Testis (tissue), 5 donors: ENCODE measurements at regions of chr4 and their contacts with region 1.

Region 1: DNA sequence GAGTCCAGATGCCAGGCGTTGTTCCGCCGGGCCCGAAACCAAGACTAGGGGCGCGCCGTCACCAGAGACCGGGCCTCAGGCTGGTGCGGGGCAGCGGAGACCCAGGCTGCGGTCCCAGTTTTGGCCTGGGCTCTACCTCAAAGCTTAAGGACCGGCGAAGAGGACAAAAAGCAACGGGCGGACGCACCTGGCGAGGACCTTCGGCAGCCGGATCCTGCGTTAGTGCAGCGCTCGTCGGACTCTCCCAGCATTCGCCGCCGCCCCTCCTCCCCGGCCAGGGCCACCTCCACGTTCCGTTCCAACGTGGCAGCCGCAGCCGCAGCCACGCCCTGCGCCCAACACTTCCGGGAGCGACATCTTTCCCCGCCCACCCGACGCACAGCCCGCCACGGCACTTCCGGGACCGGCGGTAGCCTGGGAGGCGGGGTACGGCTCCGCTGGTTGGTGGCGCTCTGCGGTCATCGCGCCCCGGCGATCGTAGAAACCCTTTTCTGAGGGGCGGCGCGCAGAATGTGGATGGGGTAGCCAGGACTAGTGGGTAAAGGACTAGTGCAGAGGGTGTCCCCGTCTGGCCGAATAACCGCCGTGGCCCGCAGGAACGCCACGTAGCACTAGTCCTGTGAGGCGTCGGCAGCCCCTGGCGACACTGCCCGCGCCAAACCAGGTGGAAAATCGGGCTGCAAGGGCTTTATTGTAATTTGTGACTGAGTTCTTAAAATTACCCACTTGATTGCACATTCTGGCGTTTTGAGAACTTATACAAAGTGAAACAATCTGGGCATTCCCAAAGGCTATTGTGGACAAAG is at the start of gene SEC31A:
- DNase-seq: peak; percentile 96
- H3K4me3 ChIP-seq: peak within 1 kb of the TSS; percentile 79 to 90
- H3K27ac ChIP-seq: peak within 1 kb of the TSS; percentile 86 to 95
- H3K4me1 ChIP-seq: peaks cover 17% of the 10 kb centered on the region
- H3K27me3 ChIP-seq: no peaks in the 10 kb centered on the region
- CTCF ChIP-seq: no peak
- POLR2A ChIP-seq: peak; percentile 86
- total RNA-seq, gene SEC31A: 168 to 191 TPM

Region 2: DNA sequence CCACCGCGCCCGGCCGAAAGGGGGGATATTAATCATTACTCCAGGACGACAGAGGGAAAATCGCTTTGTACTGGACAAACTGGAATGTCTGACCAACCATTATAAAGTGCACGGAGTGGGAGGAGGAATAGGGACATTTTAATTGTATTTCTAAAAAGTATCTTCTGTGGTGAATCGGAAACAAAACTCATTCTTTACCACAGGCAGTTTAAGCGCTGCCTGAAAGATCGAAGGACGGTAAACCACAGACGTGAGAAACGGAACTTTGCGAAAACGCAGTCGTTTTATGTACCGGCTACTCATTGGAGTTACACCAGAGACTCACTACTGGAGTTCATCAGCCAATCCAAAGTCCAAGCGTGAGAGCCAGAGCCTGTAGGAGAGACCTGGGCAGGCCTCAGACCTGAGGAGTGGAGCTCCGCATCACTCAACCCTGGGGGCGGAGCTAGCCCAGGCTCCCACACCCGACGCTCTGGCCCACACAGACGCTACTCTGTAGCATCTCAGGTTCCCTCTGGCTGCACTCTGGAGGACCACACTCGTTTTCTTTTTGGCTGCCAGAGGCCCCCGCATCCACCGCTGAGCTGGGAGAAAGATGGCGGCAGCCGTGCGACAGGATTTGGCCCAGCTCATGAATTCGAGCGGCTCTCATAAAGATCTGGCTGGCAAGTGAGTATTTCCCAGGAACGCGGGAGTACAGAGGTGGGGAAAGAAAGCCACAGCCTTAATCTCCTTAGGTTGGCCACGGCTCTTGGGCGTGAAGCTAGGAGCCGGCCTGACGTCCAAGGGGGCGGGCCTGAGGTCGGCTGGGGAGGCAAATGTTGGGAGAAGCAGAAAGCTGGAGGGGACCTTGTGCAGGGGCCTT is 143.8 kb after region 1 on chr4 and contains the start of gene COPS4:
- intact Hi-C with region 1: loop called (anchors 10 kb)
- DNase-seq: peak; percentile 99
- H3K4me3 ChIP-seq: peak within 1 kb of the TSS; percentile 81 to 89
- H3K27ac ChIP-seq: peak within 1 kb of the TSS; percentile 92 to 94
- H3K4me1 ChIP-seq: peaks cover 21% of the 10 kb centered on the region
- H3K27me3 ChIP-seq: no peaks in the 10 kb centered on the region
- CTCF ChIP-seq: peak in 2 of 3 experiments; percentile 49 to 58
- POLR2A ChIP-seq: peak; percentile 10
- total RNA-seq, gene COPS4: 73.2 to 100 TPM